Right ventricle myocardium inferior (tissue), 1 donor: ENCODE measurements at regions of chr5 and their contacts with region 1.

Region 1: GRCh38 chr5:100623719-100624118 is 88.5 kb downstream of the FAM174A start:
- DNase-seq: no peak
- ATAC-seq: no peak

Region 2: DNA sequence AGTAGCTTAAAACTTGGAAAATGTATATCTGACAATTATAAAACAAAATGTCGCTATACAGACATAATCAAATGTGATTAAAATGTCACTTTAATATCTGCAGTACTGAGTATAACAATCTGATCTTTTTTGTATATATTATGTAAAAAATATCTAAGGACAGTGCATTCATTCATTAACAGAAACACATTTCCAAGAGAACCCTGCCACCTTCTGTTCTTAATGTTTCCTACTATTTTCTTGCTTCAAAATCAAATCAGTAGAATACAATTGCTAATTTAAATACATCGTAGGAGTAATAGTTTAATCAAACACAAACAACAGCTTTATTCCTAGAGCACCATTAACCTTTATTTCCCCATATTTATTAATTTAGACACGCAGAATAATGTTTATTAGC is 422.0 kb after region 1 on chr5:
- intact Hi-C with region 1: loop called (anchors 10 kb)
- DNase-seq: no peak
- ATAC-seq: no peak